AG04450 (cell line): ENCODE measurements at regions of chr15 and their contacts with region 1.

Region 1: DNA sequence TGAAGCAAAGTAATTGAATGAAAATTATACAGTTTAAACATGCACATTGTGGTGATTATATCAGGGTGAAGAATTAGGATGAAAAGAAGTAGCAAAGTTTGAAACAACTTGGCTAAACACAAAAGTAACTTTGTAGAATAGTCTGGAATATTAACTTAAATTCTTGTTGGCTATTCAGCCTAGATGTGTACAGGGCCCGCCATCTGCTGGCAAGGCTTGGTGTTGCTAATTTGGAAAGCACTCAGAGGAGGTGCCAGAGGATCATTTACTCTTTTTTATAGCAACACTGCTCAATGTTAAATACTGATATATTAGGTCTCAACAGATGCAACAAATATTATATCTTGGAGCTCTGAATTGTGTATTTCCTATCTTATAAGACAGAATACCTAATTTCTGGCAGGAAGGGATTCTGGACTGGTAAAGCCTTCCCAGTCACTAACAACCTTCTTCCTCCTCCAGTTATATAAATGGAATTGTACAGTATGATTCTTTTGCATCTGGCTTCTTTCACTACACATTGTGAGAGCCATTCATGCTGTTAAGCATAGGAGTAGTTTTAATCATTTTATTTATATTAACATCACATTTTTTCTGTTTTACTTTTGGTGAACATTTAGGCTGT is 36.1 kb downstream of the TTC23 start:
- DNase-seq: peak; percentile 27
- H3K4me3 ChIP-seq: no peak overlapping the region
- H3K27ac ChIP-seq: no peak overlapping the region
- H3K27me3 ChIP-seq: no peaks in the 10 kb centered on the region
- CTCF ChIP-seq: peak; percentile 96

Region 2: GRCh38 chr15:99148851-99149276 is 64.4 kb before region 1 on chr15:
- CTCF ChIA-PET with region 1: no interaction called
- POLR2A ChIA-PET with region 1: no interaction called
- DNase-seq: no peak
- H3K4me3 ChIP-seq: no peak overlapping the region
- H3K27ac ChIP-seq: no peak overlapping the region
- H3K27me3 ChIP-seq: no peaks in the 10 kb centered on the region
- CTCF ChIP-seq: no peak

Region 3: DNA sequence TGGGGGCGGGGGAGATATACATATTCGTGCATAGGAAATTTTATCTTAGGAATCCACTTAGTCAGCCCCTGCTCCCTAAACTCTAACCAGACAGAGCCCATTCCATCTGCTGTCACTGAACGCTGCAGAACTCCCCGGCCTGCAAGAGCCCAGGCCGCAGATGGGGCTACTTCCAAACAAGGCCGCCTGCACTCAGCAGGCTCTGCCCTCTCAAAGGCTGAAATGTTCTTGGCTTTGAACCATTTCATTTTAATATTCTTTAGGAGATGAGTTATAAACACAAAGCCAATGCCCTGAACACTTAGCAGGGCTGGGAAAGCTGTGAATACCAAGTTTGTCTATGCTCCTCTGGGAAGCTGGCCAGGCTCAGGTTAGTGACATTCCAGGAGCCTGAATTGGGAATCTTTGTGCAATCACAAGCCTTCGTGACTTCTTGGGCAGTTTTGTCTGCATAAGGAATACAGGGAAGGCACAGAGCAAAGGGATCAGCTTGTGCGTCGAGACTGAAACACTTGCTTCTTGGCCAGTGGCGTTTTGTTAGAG is 43.5 kb before region 1 on chr15:
- CTCF ChIA-PET with region 1: interaction called, 10 read pairs
- POLR2A ChIA-PET with region 1: no interaction called
- DNase-seq: peak; percentile 47
- H3K4me3 ChIP-seq: no peak overlapping the region
- H3K27ac ChIP-seq: peak overlapping the region; percentile 93
- H3K27me3 ChIP-seq: no peaks in the 10 kb centered on the region
- CTCF ChIP-seq: no peak

Region 4: GRCh38 chr15:99197856-99198255 is 15.4 kb before region 1 on chr15:
- CTCF ChIA-PET with region 1: interaction called, 26 read pairs
- POLR2A ChIA-PET with region 1: no interaction called
- DNase-seq: no peak
- H3K4me3 ChIP-seq: no peak overlapping the region
- H3K27ac ChIP-seq: no peak overlapping the region
- H3K27me3 ChIP-seq: no peaks in the 10 kb centered on the region
- CTCF ChIP-seq: no peak

Region 5: GRCh38 chr15:99224372-99225214 is 11.3 kb after region 1 on chr15:
- CTCF ChIA-PET with region 1: interaction called, 34 read pairs
- POLR2A ChIA-PET with region 1: no interaction called
- DNase-seq: no peak
- H3K4me3 ChIP-seq: no peak overlapping the region
- H3K27ac ChIP-seq: no peak overlapping the region
- H3K27me3 ChIP-seq: no peaks in the 10 kb centered on the region
- CTCF ChIP-seq: no peak